ENCODE measurements at regions of chr13 and their contacts with region 1.

Region 1: DNA sequence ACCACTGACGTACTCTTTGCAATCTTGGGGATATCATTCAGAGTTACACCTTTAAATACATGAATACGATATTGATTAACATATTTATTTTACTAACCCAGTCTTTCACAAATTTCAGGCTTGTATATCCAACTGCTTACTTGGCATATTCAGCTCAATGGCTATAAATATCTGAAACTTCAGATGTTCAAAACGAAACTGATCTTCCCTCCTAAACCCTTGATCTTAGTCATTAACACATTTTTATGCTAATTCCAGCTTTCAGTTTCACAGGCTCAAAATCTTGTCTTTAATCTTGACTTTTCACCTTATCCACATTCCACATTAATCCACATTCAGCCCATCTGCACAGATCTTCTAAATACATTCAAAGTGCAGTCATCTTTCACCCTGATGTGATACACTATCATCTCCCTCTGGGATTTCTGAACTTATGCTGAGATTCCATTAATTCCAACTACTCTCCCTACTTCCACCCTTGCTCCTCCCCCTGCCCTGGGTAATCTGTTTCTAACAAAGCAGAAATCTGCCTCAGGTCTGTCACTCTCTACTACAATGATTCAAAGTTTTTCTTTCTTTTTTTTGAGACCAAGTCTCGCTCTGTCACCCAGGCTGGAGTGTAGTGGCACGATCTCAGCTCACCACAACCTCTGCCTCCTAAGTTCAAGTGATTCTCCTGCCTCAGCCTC is 387.2 kb downstream of the GPC5 start:
- DNase-seq: no peak
- H3K4me3 ChIP-seq: no peak overlapping the region
- H3K4me3 Mint-ChIP-seq: no peak overlapping the region
- H3K27ac Mint-ChIP-seq: no peak overlapping the region
- H3K4me1 ChIP-seq: peaks cover 15% of the 10 kb centered on the region
- H3K4me1 Mint-ChIP-seq: peaks cover 14% of the 10 kb centered on the region
- H3K27me3 ChIP-seq: no peaks in the 10 kb centered on the region
- H3K27me3 Mint-ChIP-seq: no peaks in the 10 kb centered on the region
- CTCF ChIP-seq: no peak

Region 2: DNA sequence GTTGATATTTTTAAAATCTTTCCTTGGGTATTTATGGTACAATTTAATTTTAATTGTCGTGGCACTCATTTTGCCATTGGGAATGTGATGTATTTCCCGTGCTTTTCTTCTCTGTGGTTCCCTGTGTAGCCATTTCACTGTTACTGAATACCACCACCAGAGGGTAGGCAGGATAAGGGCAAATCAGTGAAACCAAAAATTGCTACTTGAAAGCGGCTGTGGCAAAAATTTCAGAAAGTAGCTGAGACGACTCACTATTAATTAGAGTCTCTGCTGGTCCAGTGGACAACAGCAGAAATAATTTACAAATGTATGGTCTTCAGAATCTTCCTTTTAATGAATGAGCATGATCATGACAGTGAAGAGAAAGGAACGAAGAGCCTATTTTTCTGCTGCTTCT is 472.5 kb before region 1 on chr13:
- CTCF ChIA-PET with region 1: interaction called, 3 read pairs
- POLR2A ChIA-PET with region 1: no interaction called
- intact Hi-C with region 1: loop called (anchors 1 kb)
- DNase-seq: peak in 1 of 2 experiments; percentile 49
- H3K4me3 ChIP-seq: no peak overlapping the region
- H3K4me3 Mint-ChIP-seq: no peak overlapping the region
- H3K27ac Mint-ChIP-seq: no peak overlapping the region
- H3K4me1 ChIP-seq: no peaks in the 10 kb centered on the region
- H3K4me1 Mint-ChIP-seq: no peaks in the 10 kb centered on the region
- H3K27me3 ChIP-seq: no peaks in the 10 kb centered on the region
- H3K27me3 Mint-ChIP-seq: peaks cover 10% of the 10 kb centered on the region
- CTCF ChIP-seq: peak; percentile 48 to 77

Region 3: GRCh38 chr13:91381371-91381770 is 404.2 kb before region 1 on chr13:
- CTCF ChIA-PET with region 1: interaction called, 23 read pairs
- POLR2A ChIA-PET with region 1: no interaction called
- intact Hi-C with region 1: loop called (anchors 1 kb)
- DNase-seq: no peak
- H3K4me3 ChIP-seq: no peak overlapping the region
- H3K4me3 Mint-ChIP-seq: no peak overlapping the region
- H3K27ac Mint-ChIP-seq: no peak overlapping the region
- H3K4me1 ChIP-seq: no peaks in the 10 kb centered on the region
- H3K4me1 Mint-ChIP-seq: no peaks in the 10 kb centered on the region
- H3K27me3 ChIP-seq: no peaks in the 10 kb centered on the region
- H3K27me3 Mint-ChIP-seq: peaks cover 7% of the 10 kb centered on the region
- CTCF ChIP-seq: peak; percentile 52 to 54

Region 4: GRCh38 chr13:91459485-91459884 is 326.1 kb before region 1 on chr13:
- CTCF ChIA-PET with region 1: no interaction called
- POLR2A ChIA-PET with region 1: no interaction called
- intact Hi-C with region 1: loop called (anchors 5 kb)
- DNase-seq: peak in 1 of 2 experiments; percentile 6
- H3K4me3 ChIP-seq: no peak overlapping the region
- H3K4me3 Mint-ChIP-seq: no peak overlapping the region
- H3K27ac Mint-ChIP-seq: no peak overlapping the region
- H3K4me1 ChIP-seq: no peaks in the 10 kb centered on the region
- H3K4me1 Mint-ChIP-seq: no peaks in the 10 kb centered on the region
- H3K27me3 ChIP-seq: no peaks in the 10 kb centered on the region
- H3K27me3 Mint-ChIP-seq: no peaks in the 10 kb centered on the region
- CTCF ChIP-seq: no peak

Region 5: DNA sequence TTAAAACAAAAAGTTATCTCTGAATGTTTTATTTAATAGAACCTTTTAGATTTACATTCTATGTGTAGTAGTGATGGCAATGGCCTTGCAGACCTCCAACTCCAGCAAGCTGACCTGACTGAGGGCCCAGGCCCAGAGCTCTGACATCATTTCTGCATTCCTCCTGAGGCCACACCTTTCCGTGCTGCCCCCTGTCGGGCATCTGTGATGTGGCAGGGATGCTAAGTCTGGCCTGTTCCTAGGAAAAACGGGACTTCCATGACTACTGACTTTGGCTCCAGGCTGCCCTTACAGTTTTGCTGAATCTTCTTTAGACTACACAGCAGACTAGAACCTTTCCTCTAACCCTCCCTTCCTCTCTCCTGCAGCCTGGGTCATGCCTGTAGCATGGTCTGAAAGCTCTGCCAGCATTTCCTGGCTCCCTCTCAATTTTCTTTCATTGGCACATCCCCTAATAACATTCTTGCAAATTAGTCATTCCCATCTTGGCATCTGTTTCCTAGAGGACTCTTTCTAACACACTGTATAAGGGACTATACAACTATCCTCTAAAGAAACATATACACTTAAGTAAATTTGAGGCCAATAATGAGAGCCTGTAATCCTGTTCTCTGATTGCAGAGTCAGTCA is 138.1 kb before region 1 on chr13:
- CTCF ChIA-PET with region 1: no interaction called
- POLR2A ChIA-PET with region 1: no interaction called
- intact Hi-C with region 1: loop called (anchors 10 kb)
- DNase-seq: peak; percentile 42 to 54
- H3K4me3 ChIP-seq: no peak overlapping the region
- H3K4me3 Mint-ChIP-seq: no peak overlapping the region
- H3K27ac Mint-ChIP-seq: no peak overlapping the region
- H3K4me1 ChIP-seq: peaks cover 2% of the 10 kb centered on the region; the same call in 1 of the 2 replicates
- H3K4me1 Mint-ChIP-seq: no peaks in the 10 kb centered on the region
- H3K27me3 ChIP-seq: no peaks in the 10 kb centered on the region
- H3K27me3 Mint-ChIP-seq: no peaks in the 10 kb centered on the region
- CTCF ChIP-seq: peak; percentile 56 to 60

Region 6: GRCh38 chr13:91747186-91747585 is 38.4 kb before region 1 on chr13:
- CTCF ChIA-PET with region 1: interaction called, 5 read pairs
- POLR2A ChIA-PET with region 1: no interaction called
- intact Hi-C with region 1: loop called (anchors 2 kb)
- DNase-seq: peak; percentile 26 to 44
- H3K4me3 ChIP-seq: no peak overlapping the region
- H3K4me3 Mint-ChIP-seq: no peak overlapping the region
- H3K27ac Mint-ChIP-seq: no peak overlapping the region
- H3K4me1 ChIP-seq: peaks cover 23% of the 10 kb centered on the region
- H3K4me1 Mint-ChIP-seq: no peaks in the 10 kb centered on the region
- H3K27me3 ChIP-seq: no peaks in the 10 kb centered on the region
- H3K27me3 Mint-ChIP-seq: no peaks in the 10 kb centered on the region
- CTCF ChIP-seq: no peak

Measured in Caco-2 (cell line).